Activated naive CD4-positive, alpha-beta T cell treated with anti-CD3 and anti-CD28 coated beads for 36 hours (primary cell): ENCODE measurements at regions of chr20 and their contacts with region 1.

Region 1: DNA sequence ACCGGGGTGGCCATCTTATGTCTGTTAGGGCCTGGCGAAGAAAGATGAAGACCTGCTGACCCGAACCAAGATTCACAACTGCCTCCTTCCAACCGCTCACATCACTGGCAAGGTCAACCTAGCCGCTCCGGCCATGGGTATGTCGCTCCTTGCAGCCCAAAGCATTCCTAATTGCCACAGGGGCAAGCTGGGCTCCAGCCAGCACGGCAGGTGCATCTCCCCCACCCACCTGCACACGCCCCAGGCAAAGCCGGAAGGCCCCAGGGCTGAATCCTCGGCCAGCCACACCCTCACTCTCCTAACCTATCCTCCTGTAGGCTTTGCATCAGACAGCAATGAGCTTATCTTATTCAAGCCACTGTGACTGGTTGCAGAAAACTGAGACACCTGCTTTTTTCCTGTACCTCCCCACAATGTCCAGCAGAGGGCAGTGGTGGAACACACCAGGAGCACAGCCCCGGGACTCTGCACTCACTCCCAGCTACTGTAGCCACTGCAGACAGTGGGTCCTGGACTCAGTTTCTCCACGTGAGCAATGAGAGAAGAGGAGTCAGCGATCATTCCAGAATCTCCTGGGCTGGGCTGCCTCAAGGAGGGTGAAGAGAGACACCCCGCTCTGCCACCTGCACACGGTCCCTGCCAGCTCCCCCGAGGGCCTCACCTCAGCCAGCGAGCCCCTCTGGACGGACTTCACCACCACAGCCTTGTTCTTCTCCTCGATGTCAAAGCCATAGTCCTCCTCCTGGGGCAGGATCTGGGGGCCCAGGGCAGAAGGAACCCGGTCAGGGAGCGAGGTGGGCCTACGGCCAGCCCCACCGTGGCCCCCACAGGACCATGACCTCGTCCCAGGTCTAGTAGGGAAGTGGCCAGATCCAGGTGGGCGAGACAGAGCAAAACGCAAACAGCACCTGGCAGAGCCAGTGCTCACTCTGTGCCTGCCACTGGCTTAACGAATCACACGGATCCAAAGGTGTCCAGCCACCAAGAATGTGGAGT is 170.0 kb downstream of the PREX1 start:
- DNase-seq: peak; percentile 81
- H3K4me3 Mint-ChIP-seq: no peak overlapping the region
- H3K27ac Mint-ChIP-seq: peak overlapping the region; percentile 18
- H3K4me1 Mint-ChIP-seq: no peaks in the 10 kb centered on the region
- H3K27me3 Mint-ChIP-seq: no peaks in the 10 kb centered on the region

Region 2: GRCh38 chr20:48455651-48456358 is 202.0 kb before region 1 on chr20:
- CTCF ChIA-PET with region 1: no interaction called
- intact Hi-C with region 1: no loop called
- DNase-seq: no peak
- H3K4me3 Mint-ChIP-seq: no peak overlapping the region
- H3K27ac Mint-ChIP-seq: no peak overlapping the region
- H3K4me1 Mint-ChIP-seq: no peaks in the 10 kb centered on the region
- H3K27me3 Mint-ChIP-seq: peaks cover 2% of the 10 kb centered on the region

Region 3: GRCh38 chr20:48609491-48609978 is 48.2 kb before region 1 on chr20:
- CTCF ChIA-PET with region 1: no interaction called
- intact Hi-C with region 1: no loop called
- DNase-seq: no peak
- H3K4me3 Mint-ChIP-seq: no peak overlapping the region
- H3K27ac Mint-ChIP-seq: peak overlapping the region; percentile 10
- H3K4me1 Mint-ChIP-seq: peaks cover 10% of the 10 kb centered on the region
- H3K27me3 Mint-ChIP-seq: no peaks in the 10 kb centered on the region

Region 4: GRCh38 chr20:48682529-48683251 is 24.9 kb after region 1 on chr20:
- CTCF ChIA-PET with region 1: interaction called, 11 read pairs
- intact Hi-C with region 1: no loop called
- DNase-seq: no peak
- H3K4me3 Mint-ChIP-seq: no peak overlapping the region
- H3K27ac Mint-ChIP-seq: no peak overlapping the region
- H3K4me1 Mint-ChIP-seq: no peaks in the 10 kb centered on the region
- H3K27me3 Mint-ChIP-seq: no peaks in the 10 kb centered on the region

Region 5: GRCh38 chr20:48718857-48719578 is 61.2 kb after region 1 on chr20:
- CTCF ChIA-PET with region 1: interaction called, 4 read pairs
- intact Hi-C with region 1: loop called (anchors 5 kb)
- DNase-seq: peak; percentile 32
- H3K4me3 Mint-ChIP-seq: peak overlapping the region; percentile 11
- H3K27ac Mint-ChIP-seq: no peak overlapping the region
- H3K4me1 Mint-ChIP-seq: peaks cover 51% of the 10 kb centered on the region
- H3K27me3 Mint-ChIP-seq: no peaks in the 10 kb centered on the region

Region 6: DNA sequence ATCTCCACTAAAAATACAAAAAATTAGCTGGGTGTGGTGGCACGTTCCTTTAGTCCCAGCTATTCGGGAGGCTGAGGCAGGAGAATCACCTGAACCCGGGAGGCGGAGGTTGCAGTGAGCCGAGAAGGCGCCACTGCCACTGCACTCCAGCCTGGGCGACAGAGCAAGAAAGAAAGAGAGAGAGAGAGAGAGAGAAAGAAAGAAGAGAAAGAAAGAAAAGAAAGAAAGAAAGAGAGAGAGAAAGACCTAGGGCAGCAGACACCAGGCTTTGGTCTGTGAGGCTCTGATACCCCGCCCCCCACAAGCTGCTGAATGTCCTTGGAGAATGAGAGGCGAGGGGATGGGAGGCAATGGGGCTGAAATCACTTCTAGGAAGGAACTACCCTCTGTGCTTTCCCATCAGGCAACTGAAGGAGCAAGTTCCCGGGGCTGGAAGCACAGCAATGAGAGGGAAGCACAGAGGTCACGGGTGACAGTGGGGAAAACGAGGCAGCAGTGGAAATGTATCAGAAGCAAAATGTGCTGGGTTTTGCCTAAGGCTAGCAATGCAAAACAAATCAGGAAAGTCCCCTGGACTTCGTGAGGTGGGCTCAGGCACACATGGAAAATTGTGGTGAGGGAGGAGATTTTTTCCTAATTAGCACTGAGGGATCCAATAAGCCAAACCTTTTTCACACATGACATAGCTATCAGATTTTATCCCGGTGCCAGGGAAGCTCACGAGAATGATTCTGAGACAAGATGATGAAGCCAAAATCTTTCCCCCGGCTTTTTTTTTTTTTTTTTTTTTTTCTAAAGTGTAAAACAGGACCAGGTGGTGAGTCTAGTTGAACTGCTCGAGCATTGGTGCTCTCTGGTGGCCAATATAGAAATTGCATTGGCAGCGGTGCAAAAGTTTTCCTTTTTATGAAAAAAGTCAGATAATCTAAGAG is 246.9 kb after region 1 on chr20:
- CTCF ChIA-PET with region 1: interaction called, 108 read pairs
- intact Hi-C with region 1: loop called (anchors 1 kb)
- DNase-seq: peak; percentile 85
- H3K4me3 Mint-ChIP-seq: no peak overlapping the region
- H3K27ac Mint-ChIP-seq: no peak overlapping the region
- H3K4me1 Mint-ChIP-seq: peaks cover 5% of the 10 kb centered on the region
- H3K27me3 Mint-ChIP-seq: no peaks in the 10 kb centered on the region

Region 7: GRCh38 chr20:49948809-49949548 is 1291.2 kb after region 1 on chr20:
- CTCF ChIA-PET with region 1: no interaction called
- intact Hi-C with region 1: no loop called
- DNase-seq: no peak
- H3K4me3 Mint-ChIP-seq: no peak overlapping the region
- H3K27ac Mint-ChIP-seq: no peak overlapping the region
- H3K4me1 Mint-ChIP-seq: peaks cover 22% of the 10 kb centered on the region
- H3K27me3 Mint-ChIP-seq: no peaks in the 10 kb centered on the region